Colonic mucosa (tissue), 4 donors: ENCODE measurements at regions of chr19 and their contacts with region 1.

Region 1: DNA sequence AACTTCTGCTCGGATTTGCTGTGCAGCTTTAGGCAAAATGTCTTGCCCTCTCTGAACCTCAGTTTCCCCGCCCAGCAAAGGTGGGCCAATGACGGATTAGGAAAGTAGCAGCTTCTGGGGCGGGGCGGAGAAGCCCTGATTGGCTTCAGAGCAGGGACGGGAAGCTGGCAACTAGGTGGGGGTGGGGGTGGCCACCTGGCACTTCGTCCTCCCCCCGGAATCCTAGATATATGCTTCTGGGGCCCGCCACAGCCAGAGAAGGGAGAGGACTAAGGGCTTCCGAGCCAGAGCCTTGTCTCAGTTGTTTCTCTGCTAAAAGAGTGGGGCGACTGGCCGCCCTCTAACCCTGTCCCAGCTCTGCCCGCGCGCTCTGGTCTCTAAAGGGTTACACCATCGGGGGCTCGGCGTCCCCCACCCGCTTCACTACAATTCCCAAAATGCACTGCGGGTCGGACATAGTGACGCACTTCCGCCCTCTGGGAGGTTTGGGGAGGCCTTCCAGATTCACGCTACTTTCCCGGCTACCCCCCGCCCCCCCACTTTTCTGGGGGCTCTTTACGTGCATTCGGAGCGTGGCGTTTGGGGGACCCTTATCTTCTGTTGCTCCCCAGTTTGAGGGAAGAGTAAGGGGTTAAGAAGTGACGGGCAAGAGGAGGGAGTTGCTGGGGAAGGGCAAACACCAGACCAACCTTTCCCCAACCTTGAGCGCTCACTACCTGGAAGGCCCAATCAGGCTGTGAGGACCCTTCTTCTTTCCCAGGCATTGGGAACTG is 672 bp upstream of the IRF2BP1 start:
- DNase-seq: peak; percentile 95
- H3K4me3 ChIP-seq: peak overlapping the region; percentile 89
- H3K27ac ChIP-seq: peak overlapping the region; percentile 89
- H3K4me1 ChIP-seq: peaks cover 21% of the 10 kb centered on the region
- H3K27me3 ChIP-seq: no peaks in the 10 kb centered on the region
- CTCF ChIP-seq: no peak

Region 2: GRCh38 chr19:45817010-45817724 is 69.4 kb before region 1 on chr19:
- intact Hi-C with region 1: loop called (anchors 10 kb)
- DNase-seq: peak; percentile 97
- H3K4me3 ChIP-seq: no peak overlapping the region
- H3K27ac ChIP-seq: no peak overlapping the region
- H3K4me1 ChIP-seq: no peaks in the 10 kb centered on the region
- H3K27me3 ChIP-seq: no peaks in the 10 kb centered on the region
- CTCF ChIP-seq: peak; percentile 98

Region 3: GRCh38 chr19:45862564-45863334 is 23.9 kb before region 1 on chr19 and contains the start of gene SYMPK:
- intact Hi-C with region 1: loop called (anchors 1 kb)
- DNase-seq: peak; percentile 98
- H3K4me3 ChIP-seq: peak within 1 kb of the TSS; percentile 77
- H3K27ac ChIP-seq: peak within 1 kb of the TSS; percentile 89
- H3K4me1 ChIP-seq: peaks cover 6% of the 10 kb centered on the region
- H3K27me3 ChIP-seq: no peaks in the 10 kb centered on the region
- CTCF ChIP-seq: no peak
- total RNA-seq, gene SYMPK: 55.7 to 101 TPM